AG04449 (cell line): ENCODE measurements at regions of chr21 and their contacts with region 1.

Region 1: GRCh38 chr21:38219049-38219628 is 37.7 kb upstream of the KCNJ15 start:
- DNase-seq: peak; percentile 5
- H3K4me3 ChIP-seq: no peak overlapping the region
- CTCF ChIP-seq: peak; percentile 90

Region 2: DNA sequence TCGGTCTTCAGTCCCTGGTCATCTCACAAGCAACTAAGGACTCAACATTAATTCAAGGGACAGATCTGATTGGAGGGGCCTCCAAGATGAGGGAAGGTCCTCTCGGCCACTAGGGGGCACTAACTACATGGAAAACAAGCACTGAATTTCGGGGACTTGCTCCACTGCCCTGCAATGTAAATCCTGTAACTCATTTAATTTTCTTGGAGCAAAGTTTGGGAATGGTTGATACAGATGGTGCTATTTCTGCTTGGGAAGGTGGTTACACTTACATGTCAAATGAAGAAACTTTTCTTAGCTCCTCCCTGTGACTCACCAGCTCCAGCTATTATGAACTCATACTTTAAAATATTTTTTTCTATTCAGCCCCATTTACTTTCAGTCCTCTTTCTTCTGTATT is 59.8 kb before region 1 on chr21:
- CTCF ChIA-PET with region 1: interaction called, 19 read pairs
- POLR2A ChIA-PET with region 1: no interaction called
- DNase-seq: peak; percentile 49
- H3K4me3 ChIP-seq: no peak overlapping the region
- CTCF ChIP-seq: peak; percentile 82

Region 3: GRCh38 chr21:38181096-38181495 is 38.0 kb before region 1 on chr21:
- CTCF ChIA-PET with region 1: interaction called, 21 read pairs
- POLR2A ChIA-PET with region 1: no interaction called
- DNase-seq: no peak
- H3K4me3 ChIP-seq: no peak overlapping the region
- CTCF ChIP-seq: no peak

Region 4: GRCh38 chr21:38196036-38196435 is 23.1 kb before region 1 on chr21:
- CTCF ChIA-PET with region 1: no interaction called
- POLR2A ChIA-PET with region 1: no interaction called
- DNase-seq: no peak
- H3K4me3 ChIP-seq: no peak overlapping the region
- CTCF ChIP-seq: no peak

Region 5: GRCh38 chr21:38236232-38236631 is 17.1 kb after region 1 on chr21:
- CTCF ChIA-PET with region 1: interaction called, 87 read pairs
- POLR2A ChIA-PET with region 1: no interaction called
- DNase-seq: no peak
- H3K4me3 ChIP-seq: no peak overlapping the region
- CTCF ChIP-seq: peak; percentile 13

Region 6: GRCh38 chr21:38333301-38334272 is 114.4 kb after region 1 on chr21:
- CTCF ChIA-PET with region 1: interaction called, 19 read pairs
- POLR2A ChIA-PET with region 1: no interaction called
- DNase-seq: no peak
- H3K4me3 ChIP-seq: no peak overlapping the region
- CTCF ChIP-seq: peak; percentile 22